HEK293 (cell line): ENCODE measurements at regions of chr15 and their contacts with region 1.

Region 1: DNA sequence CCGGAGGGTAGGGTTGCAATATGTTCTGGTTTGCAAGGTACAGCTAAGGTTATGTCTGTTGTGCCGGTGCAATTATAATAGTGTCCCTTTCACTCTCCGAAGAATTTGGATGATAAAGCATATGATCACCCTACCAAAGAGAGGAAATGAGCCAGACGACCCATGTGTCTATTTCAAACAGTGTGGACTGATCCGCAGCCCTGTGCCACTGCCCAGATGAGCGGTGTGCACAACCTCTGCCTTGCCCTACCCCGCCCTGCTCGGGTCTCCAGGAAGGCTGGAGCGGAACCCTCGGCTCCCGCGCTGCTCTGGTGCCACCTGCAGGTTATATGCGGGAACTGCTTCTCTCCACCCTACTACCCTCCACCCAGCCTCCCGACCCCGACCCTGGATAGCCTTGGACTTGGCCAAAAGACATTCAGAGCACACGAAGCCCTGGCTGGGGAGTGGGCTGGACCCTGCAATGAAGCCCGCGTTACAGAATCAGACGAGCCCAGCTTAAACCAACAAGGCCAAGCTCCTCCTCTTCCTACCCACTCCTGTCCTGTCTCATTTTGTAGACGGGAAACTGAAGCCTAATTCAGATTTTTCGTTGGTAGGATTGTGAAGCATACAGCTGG is 68.4 kb upstream of the CHRNB4 start:
- H3K4me3 ChIP-seq: no peak overlapping the region
- H3K27ac ChIP-seq: no peak overlapping the region
- H3K4me1 ChIP-seq: no peaks in the 10 kb centered on the region
- CTCF ChIP-seq: peak; percentile 94

Region 2: GRCh38 chr15:78308422-78309032 is 400.8 kb before region 1 on chr15:
- CTCF ChIA-PET with region 1: interaction called, 23 read pairs
- POLR2A ChIA-PET with region 1: no interaction called
- H3K4me3 ChIP-seq: no peak overlapping the region
- H3K27ac ChIP-seq: no peak overlapping the region
- H3K4me1 ChIP-seq: no peaks in the 10 kb centered on the region
- CTCF ChIP-seq: peak; percentile 91

Region 3: DNA sequence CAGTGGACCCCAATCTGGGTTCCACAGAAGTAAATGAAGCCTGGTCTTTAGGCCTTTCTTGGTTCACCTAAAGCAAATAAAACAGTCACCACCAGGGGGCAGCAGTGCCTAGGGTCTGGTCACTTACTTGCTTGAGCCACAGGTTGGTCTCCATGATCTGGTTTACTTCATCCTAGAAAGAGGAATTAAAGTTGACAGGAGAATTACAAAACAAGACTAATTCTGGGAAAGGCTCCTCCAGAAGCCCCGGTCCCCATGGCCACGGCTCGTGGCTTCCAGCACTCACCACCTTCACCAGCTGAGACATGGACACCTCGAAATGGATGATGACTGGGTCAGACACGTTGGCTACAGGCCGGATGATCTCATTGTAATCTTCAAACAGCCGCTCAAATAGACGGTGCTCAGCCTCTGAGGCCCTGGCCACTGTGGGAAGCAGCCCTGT is 90.9 kb before region 1 on chr15:
- CTCF ChIA-PET with region 1: interaction called, 91 read pairs
- POLR2A ChIA-PET with region 1: no interaction called
- H3K4me3 ChIP-seq: no peak overlapping the region
- H3K27ac ChIP-seq: no peak overlapping the region
- H3K4me1 ChIP-seq: no peaks in the 10 kb centered on the region
- CTCF ChIP-seq: peak; percentile 1

Region 4: DNA sequence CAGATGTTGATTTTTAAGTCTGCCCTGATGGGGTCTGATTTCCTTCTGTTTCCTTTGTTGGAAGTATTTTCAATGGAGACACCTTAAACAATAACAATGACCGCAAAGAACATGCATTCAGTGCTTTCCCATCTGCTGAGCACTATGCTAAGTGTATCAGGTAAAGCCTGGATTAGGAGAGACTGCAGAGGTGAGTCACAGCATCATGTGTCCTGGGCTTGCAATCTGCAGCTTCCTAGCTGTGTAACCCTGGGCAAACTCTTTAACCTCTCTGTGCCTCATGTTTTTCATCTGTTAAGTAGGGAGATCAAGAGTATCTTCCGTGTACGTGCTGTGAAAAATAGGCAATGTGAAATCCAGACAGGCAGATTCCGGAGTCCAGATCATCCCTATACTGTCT is 55.1 kb before region 1 on chr15:
- CTCF ChIA-PET with region 1: interaction called, 19 read pairs
- POLR2A ChIA-PET with region 1: no interaction called
- H3K4me3 ChIP-seq: no peak overlapping the region
- H3K27ac ChIP-seq: no peak overlapping the region
- H3K4me1 ChIP-seq: no peaks in the 10 kb centered on the region
- CTCF ChIP-seq: no peak

Region 5: GRCh38 chr15:78695854-78696253 is 13.5 kb before region 1 on chr15:
- CTCF ChIA-PET with region 1: interaction called, 16 read pairs
- POLR2A ChIA-PET with region 1: no interaction called
- H3K4me3 ChIP-seq: no peak overlapping the region
- H3K27ac ChIP-seq: no peak overlapping the region
- H3K4me1 ChIP-seq: no peaks in the 10 kb centered on the region
- CTCF ChIP-seq: no peak